CD8-positive, alpha-beta memory T cell (primary cell): ENCODE measurements at regions of chr22 and their contacts with region 1.

Region 1: DNA sequence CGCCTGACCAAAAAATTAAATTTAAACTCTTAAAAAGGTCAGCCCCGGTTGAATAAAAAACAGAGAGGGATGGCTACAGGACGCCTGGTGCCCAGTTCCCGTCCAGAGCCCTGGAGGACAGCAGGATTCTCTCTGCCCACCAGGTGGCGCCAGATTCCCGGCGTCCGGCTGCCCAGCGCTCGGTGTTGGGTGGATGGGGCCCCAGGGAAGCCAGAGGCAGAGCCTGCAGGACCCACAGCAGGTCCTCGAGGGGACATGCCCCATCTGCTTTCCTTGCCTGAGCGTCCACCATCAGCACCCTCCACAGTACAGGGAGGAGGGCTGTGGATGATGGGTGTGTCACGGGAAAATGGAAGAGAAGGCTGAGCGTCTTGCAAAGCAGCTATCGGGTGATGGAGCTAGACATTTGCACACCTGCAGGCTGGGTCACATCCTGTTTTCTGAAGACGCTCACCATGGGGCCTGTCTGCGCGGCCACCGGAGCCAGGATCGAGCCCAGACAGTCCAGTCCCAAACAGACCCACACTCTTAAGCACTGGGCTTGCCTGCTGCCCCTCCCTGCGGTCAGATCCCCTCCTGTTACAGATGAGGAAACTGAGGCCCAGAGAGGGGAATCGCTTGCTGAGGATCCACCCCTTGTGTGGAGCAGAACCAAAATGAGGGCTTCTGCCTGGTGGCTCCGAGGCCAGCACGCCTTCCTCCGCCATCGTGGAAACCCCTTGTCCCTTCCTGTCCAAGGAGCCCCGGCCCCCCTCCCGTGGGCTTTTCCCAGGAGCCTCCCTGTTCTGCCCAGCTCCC is 18.5 kb upstream of the CBX7 start:
- DNase-seq: peak; percentile 76 to 86 (median 81)
- H3K4me3 ChIP-seq: peak overlapping the region; percentile 64
- H3K4me3 Mint-ChIP-seq: peak overlapping the region; percentile 44 to 79 (median 74)
- H3K27ac ChIP-seq: peak overlapping the region; percentile 61
- H3K27ac Mint-ChIP-seq: peak overlapping the region; percentile 94 to 99 (median 96)
- H3K4me1 ChIP-seq: peaks cover 53% of the 10 kb centered on the region
- H3K4me1 Mint-ChIP-seq: peaks cover 45 to 54% (median 51%) of the 10 kb centered on the region in 3 donors
- H3K27me3 ChIP-seq: no peaks in the 10 kb centered on the region
- H3K27me3 Mint-ChIP-seq: peaks cover 0 to 5% of the 10 kb centered on the region in 2 donors

Region 2: DNA sequence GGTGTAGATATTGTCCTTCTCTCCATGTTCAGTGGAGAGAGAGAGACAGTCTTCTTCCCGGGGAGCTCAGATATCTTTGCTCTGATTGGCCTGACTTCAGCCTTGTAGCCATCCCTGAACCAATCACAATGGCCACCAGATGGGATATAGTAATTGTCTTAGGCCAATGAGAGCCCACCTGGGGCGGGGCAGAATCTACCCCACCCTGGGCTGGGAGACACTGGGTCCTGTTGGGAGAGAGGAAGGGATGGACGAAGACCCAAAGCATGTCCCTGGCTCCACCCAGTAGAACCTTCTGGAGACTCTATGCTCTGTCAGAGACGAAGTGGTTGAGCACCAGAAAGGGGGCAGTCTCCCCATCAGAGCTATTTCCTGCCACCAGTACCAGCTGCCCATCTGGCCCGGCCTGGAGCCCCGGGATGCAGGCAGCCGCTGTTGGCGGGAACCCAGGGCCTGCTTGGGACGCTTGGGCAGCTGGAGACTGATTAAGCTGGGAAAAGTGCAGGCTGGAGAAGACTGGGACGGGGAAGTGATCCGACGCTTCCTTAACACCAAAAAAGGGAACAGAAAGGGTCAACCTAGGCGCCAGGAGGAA is 13.1 kb after region 1 on chr22:
- CTCF ChIA-PET with region 1: interaction called, 16 read pairs
- POLR2A ChIA-PET with region 1: no interaction called
- DNase-seq: no peak
- H3K4me3 ChIP-seq: no peak overlapping the region
- H3K4me3 Mint-ChIP-seq: no peak overlapping the region
- H3K27ac ChIP-seq: no peak overlapping the region
- H3K27ac Mint-ChIP-seq: no peak overlapping the region
- H3K4me1 ChIP-seq: no peaks in the 10 kb centered on the region
- H3K4me1 Mint-ChIP-seq: peaks cover 8 to 11% (median 9%) of the 10 kb centered on the region in 3 donors
- H3K27me3 ChIP-seq: no peaks in the 10 kb centered on the region
- H3K27me3 Mint-ChIP-seq: peaks cover 0 to 1% of the 10 kb centered on the region in 2 donors

Region 3: DNA sequence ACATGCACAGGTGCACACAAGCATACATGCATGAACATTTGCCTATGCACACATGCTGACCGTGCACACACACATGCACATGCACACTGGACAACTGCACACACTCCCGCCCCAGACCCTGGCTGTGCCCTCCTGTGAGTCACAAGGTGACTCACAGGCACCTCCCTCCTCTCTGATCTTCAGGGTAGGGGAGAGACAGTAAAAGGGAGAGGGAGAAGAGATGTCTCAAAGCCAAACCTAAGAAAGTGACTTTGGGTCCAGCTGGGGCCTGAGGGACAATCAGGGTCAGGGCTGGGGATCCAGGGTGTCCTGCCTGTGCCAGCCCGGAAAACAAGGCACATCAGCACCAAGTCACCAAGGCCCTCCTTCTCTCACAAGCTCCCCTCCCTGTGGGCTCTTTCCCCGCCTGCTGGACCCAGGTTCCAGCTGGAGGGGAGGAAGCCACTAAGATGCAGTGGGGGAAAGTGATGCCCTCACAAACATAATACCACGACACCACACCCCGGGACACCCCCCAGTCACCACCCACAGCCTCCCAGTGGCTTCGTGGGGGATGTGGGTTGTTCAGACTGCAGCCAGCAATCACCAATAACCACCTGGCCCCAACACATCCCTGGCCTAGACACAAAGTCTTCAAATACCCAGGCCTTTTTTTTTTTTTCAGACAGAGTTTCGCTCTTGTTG is 34.5 kb after region 1 on chr22:
- CTCF ChIA-PET with region 1: interaction called, 29 read pairs
- POLR2A ChIA-PET with region 1: interaction called, 6 read pairs
- DNase-seq: peak in 4 of 5 donors; percentile 21 to 88 (median 74)
- H3K4me3 ChIP-seq: no peak overlapping the region
- H3K4me3 Mint-ChIP-seq: peak overlapping the region; percentile 44 to 86 (median 71)
- H3K27ac ChIP-seq: no peak overlapping the region
- H3K27ac Mint-ChIP-seq: peak overlapping the region; percentile 84 to 97 (median 90)
- H3K4me1 ChIP-seq: no peaks in the 10 kb centered on the region
- H3K4me1 Mint-ChIP-seq: peaks cover 36 to 50% (median 41%) of the 10 kb centered on the region in 3 donors
- H3K27me3 ChIP-seq: no peaks in the 10 kb centered on the region
- H3K27me3 Mint-ChIP-seq: peaks cover 0 to 7% of the 10 kb centered on the region in 2 donors

Region 4: DNA sequence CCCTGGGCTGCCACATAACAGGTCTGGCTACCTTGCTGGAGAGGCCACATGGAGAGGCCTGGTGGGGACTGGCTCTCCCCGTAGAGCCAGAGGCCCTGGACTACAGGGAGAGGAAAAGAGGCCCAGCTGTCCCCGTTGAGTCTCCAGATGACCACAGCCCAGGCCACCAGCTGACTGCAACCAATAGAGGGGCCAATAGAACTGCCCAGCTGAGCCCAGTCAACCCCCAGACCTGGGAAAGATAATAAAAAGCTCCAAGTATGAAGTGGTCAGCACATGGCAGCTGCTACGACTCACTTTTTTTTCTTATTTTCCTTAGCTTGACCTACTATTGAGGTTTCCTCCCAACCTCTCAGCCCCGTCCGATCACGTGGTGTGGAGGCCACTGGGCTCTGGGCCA is 55.3 kb after region 1 on chr22:
- CTCF ChIA-PET with region 1: interaction called, 11 read pairs
- POLR2A ChIA-PET with region 1: no interaction called
- DNase-seq: no peak
- H3K4me3 ChIP-seq: no peak overlapping the region
- H3K4me3 Mint-ChIP-seq: no peak overlapping the region
- H3K27ac ChIP-seq: no peak overlapping the region
- H3K27ac Mint-ChIP-seq: peak overlapping the region in 2 of 8 donors; percentile 46 to 58
- H3K4me1 ChIP-seq: no peaks in the 10 kb centered on the region
- H3K4me1 Mint-ChIP-seq: peaks cover 6 to 29% (median 12%) of the 10 kb centered on the region in 3 donors
- H3K27me3 ChIP-seq: no peaks in the 10 kb centered on the region
- H3K27me3 Mint-ChIP-seq: peaks cover 0 to 8% of the 10 kb centered on the region in 2 donors

Region 5: DNA sequence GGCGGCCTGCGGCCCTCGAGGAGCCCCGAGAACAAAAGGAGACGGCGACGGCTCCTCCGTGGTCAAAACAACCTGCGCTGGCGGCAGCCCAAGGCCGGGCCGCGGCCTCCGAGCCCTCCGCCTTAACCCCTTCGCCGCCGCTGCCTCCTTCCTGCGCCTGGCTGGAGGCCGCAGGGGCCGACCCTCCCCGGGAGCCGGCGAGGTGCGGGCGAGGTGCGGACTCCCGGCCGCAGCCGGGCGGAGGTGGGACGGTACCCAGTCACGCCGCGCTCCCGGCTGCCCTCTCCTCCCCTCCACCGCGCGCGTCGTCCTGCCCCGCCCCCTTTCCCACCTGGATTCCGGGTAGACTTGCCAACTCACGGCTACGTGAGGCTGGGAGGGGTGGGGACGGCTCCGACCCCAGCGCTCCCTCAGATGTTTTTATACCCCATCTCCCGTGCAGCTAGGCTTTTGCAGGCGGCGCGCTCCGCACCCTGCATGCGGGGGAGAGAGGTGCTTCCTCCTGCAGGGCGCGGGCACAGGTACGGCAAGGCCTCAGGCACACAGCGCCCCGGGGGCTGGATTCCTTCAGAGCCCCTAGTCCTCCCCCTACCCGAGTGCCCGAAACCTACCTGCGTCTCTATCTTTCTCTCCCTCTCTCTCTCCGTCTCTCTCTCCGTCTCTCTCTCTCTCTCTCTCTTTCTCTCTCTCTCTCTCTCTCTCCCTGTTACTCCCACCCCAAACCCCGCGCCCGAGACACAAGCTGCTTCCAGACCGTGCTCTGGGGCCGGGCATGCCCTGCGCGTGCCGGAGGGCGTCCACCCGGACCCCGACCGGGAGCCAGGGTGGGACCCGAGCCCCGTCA is 71.8 kb after region 1 on chr22:
- CTCF ChIA-PET with region 1: interaction called, 65 read pairs
- POLR2A ChIA-PET with region 1: interaction called, 13 read pairs
- DNase-seq: peak in 4 of 5 donors; percentile 39 to 69 (median 52)
- H3K4me3 ChIP-seq: peak overlapping the region; percentile 71
- H3K4me3 Mint-ChIP-seq: peak overlapping the region; percentile 91 to 98 (median 94)
- H3K27ac ChIP-seq: peak overlapping the region; percentile 57
- H3K27ac Mint-ChIP-seq: peak overlapping the region; percentile 80 to 95 (median 91)
- H3K4me1 ChIP-seq: peaks cover 46% of the 10 kb centered on the region
- H3K4me1 Mint-ChIP-seq: peaks cover 53 to 74% (median 57%) of the 10 kb centered on the region in 3 donors
- H3K27me3 ChIP-seq: no peaks in the 10 kb centered on the region
- H3K27me3 Mint-ChIP-seq: peaks cover 0 to 3% of the 10 kb centered on the region in 2 donors

Region 6: DNA sequence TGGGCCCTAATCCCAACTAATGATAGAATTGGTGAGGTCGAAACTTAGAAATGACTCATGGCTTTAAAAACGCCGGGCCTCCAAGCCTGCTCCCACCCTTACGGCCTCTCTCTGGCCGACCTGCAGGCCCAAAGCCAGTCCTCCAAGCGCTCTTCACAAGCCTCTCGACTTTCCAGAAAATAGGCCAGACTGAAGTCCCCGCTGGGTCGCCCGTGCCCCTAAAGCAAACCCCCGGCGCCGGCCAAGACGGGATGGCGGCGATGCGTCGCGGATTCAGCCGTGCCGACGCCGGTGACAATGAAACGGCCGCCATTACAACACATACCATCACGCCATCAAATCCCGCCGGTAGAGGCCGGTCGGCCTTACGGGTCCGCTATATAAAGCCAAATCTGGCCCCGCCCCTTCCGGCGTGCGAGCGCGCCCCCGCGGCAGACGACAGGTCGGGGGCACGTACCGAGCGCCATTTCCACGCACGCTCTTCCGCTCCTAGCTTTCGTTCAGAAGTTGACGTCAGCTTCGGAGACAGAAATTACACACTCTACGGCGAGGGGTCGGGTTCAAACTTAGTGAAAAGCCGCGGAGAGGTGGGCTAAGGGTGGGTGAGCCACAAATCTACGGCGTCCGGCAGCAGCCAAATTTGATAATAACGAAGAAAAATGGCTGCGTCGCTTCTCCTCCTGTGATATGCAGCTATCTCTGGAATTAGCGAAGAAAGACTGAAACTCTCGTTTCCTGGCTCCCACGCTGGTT is 148.4 kb after region 1 on chr22 and contains the start of gene RPL3:
- CTCF ChIA-PET with region 1: interaction called, 178 read pairs
- POLR2A ChIA-PET with region 1: interaction called, 89 read pairs
- DNase-seq: peak; percentile 93 to 98 (median 97)
- H3K4me3 ChIP-seq: peak within 1 kb of the TSS; percentile 99
- H3K4me3 Mint-ChIP-seq: peak within 1 kb of the TSS; percentile 95 to 100 (median 99)
- H3K27ac ChIP-seq: peak within 1 kb of the TSS; percentile 93
- H3K27ac Mint-ChIP-seq: peak within 1 kb of the TSS; percentile 90 to 99 (median 97)
- H3K4me1 ChIP-seq: peaks cover 42% of the 10 kb centered on the region
- H3K4me1 Mint-ChIP-seq: peaks cover 47 to 57% (median 52%) of the 10 kb centered on the region in 3 donors
- H3K27me3 ChIP-seq: no peaks in the 10 kb centered on the region
- H3K27me3 Mint-ChIP-seq: peaks cover 0 to 10% of the 10 kb centered on the region in 2 donors
- total RNA-seq, gene RPL3: 2,574 to 2,607 TPM

Region 7: GRCh38 chr22:39520054-39520891 is 349.2 kb after region 1 on chr22 and contains the start of gene ATF4:
- CTCF ChIA-PET with region 1: no interaction called
- POLR2A ChIA-PET with region 1: no interaction called
- DNase-seq: peak; percentile 94 to 99 (median 96)
- H3K4me3 ChIP-seq: peak within 1 kb of the TSS; percentile 90
- H3K4me3 Mint-ChIP-seq: peak within 1 kb of the TSS; percentile 89 to 99 (median 96)
- H3K27ac ChIP-seq: peak within 1 kb of the TSS; percentile 80
- H3K27ac Mint-ChIP-seq: peak within 1 kb of the TSS; percentile 95 to 100 (median 98)
- H3K4me1 ChIP-seq: peaks cover 39% of the 10 kb centered on the region
- H3K4me1 Mint-ChIP-seq: peaks cover 47 to 56% (median 51%) of the 10 kb centered on the region in 3 donors
- H3K27me3 ChIP-seq: no peaks in the 10 kb centered on the region
- H3K27me3 Mint-ChIP-seq: peaks cover 0 to 14% of the 10 kb centered on the region in 2 donors
- total RNA-seq, gene ATF4: 757 to 758 TPM